ENCODE measurements at regions of chr3 and their contacts with region 1.

Region 1: GRCh38 chr3:190048932-190049441 is 71.7 kb downstream of the P3H2 start:
- DNase-seq: peak; percentile 83
- ATAC-seq: peak; percentile 84
- H3K4me3 ChIP-seq: peak overlapping the region; percentile 50; the same call in 1 of the 2 replicates
- H3K27ac ChIP-seq: peak overlapping the region; percentile 47; the same call in 1 of the 2 replicates
- H3K4me1 ChIP-seq: peaks cover 7% of the 10 kb centered on the region
- H3K27me3 ChIP-seq: no peaks in the 10 kb centered on the region
- CTCF ChIP-seq: no peak
- POLR2A ChIP-seq: no peak
- RAD21 ChIP-seq: no peak

Region 2: GRCh38 chr3:189841473-189842210 is 207.3 kb before region 1 on chr3:
- CTCF ChIA-PET with region 1: no interaction called
- POLR2A ChIA-PET with region 1: no interaction called
- dilution Hi-C with region 1: no loop called
- in situ Hi-C with region 1: no loop called
- intact Hi-C with region 1: no loop called
- DNase-seq: peak; percentile 64
- ATAC-seq: no peak
- H3K4me3 ChIP-seq: no peak overlapping the region
- H3K27ac ChIP-seq: no peak overlapping the region
- H3K4me1 ChIP-seq: 0 out of 2 replicates have a peak, but pooled peaks cover 1% of the 10 kb centered on the region
- H3K27me3 ChIP-seq: no peaks in the 10 kb centered on the region; the same call in 1 of the 2 replicates
- CTCF ChIP-seq: no peak
- POLR2A ChIP-seq: no peak
- RAD21 ChIP-seq: no peak

Region 3: GRCh38 chr3:190092250-190092649 is 43.3 kb after region 1 on chr3:
- CTCF ChIA-PET with region 1: no interaction called
- POLR2A ChIA-PET with region 1: no interaction called
- dilution Hi-C with region 1: no loop called
- in situ Hi-C with region 1: no loop called
- intact Hi-C with region 1: loop called (anchors 5 kb)
- DNase-seq: peak; percentile 91
- ATAC-seq: peak; percentile 86
- H3K4me3 ChIP-seq: no peak overlapping the region
- H3K27ac ChIP-seq: no peak overlapping the region; the same call in 1 of the 2 replicates
- H3K4me1 ChIP-seq: peaks cover 11% of the 10 kb centered on the region
- H3K27me3 ChIP-seq: no peaks in the 10 kb centered on the region
- CTCF ChIP-seq: no peak
- POLR2A ChIP-seq: no peak
- RAD21 ChIP-seq: 0 out of 2 replicates have a peak, but pooled peaks have one; percentile 4

Region 4: DNA sequence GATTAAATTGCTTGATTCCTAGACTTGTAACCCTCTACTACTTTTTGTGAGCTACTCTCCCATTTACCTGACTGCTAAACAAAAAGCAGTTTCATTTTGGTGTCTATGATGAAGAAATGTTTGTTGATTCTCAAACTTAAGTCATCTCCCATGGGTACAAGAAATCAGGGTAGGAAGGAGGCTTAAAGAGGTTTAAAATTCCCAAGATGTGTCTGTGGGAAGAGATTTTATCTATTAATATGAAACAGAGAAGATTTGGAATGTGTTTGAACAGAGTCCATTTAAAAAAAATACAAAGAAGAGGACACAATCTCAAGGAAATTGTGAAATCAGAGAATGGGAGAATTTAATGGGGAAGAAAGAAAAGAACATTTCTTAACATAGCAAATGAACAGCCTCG is 56.9 kb after region 1 on chr3:
- CTCF ChIA-PET with region 1: no interaction called
- POLR2A ChIA-PET with region 1: no interaction called
- dilution Hi-C with region 1: no loop called
- in situ Hi-C with region 1: no loop called
- intact Hi-C with region 1: no loop called
- DNase-seq: no peak
- ATAC-seq: no peak
- H3K4me3 ChIP-seq: no peak overlapping the region
- H3K27ac ChIP-seq: no peak overlapping the region
- H3K4me1 ChIP-seq: peaks cover 1% of the 10 kb centered on the region
- H3K27me3 ChIP-seq: no peaks in the 10 kb centered on the region
- CTCF ChIP-seq: no peak
- POLR2A ChIP-seq: no peak
- RAD21 ChIP-seq: no peak

Measured in IMR-90 (cell line).